Aorta (tissue), 5 donors: ENCODE measurements at regions of chr12 and their contacts with region 1.

Region 1: GRCh38 chr12:109995686-109996482 is at the start of gene GIT2:
- DNase-seq: peak; percentile 97
- ATAC-seq: peak; percentile 95
- H3K4me3 ChIP-seq: peak within 1 kb of the TSS; percentile 63 to 94
- H3K27ac ChIP-seq: peak within 1 kb of the TSS in 1 of 2 donors; percentile 7
- H3K4me1 ChIP-seq: peaks cover 0 to 3% of the 10 kb centered on the region in 2 donors
- H3K27me3 ChIP-seq: no peaks in the 10 kb centered on the region
- total RNA-seq, gene GIT2: 54.3 to 78.0 TPM

Region 2: DNA sequence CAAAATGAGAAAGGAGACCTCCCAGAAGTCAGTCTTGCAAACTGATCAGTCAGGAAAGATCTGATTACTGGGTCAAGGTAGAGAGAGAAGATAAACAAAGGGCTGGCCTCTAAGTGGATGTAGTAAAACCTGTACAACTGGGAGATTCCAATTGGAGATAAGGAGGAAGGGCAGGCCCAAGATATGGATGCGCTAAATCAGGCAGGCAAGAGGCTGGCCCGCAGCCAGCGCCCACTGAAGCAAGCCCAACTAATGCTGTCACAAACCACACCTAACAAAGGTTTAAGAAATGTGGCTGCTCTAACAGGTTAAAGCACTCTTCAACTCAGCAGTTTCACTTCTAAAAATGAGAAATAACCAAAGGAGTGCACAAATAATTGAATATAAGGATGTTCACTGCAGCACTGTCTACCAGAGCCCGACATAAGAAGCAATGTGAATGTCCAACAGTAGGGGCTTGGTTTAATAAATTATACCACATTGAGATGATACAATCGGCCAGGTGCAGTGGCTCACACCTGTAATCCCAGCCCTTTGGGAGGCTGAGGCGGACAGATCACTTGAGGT is 120.2 kb before region 1 on chr12:
- intact Hi-C with region 1: no loop called
- DNase-seq: no peak
- ATAC-seq: no peak
- H3K4me3 ChIP-seq: no peak overlapping the region
- H3K27ac ChIP-seq: no peak overlapping the region
- H3K4me1 ChIP-seq: peaks cover 0 to 4% of the 10 kb centered on the region in 2 donors
- H3K27me3 ChIP-seq: no peaks in the 10 kb centered on the region

Region 3: DNA sequence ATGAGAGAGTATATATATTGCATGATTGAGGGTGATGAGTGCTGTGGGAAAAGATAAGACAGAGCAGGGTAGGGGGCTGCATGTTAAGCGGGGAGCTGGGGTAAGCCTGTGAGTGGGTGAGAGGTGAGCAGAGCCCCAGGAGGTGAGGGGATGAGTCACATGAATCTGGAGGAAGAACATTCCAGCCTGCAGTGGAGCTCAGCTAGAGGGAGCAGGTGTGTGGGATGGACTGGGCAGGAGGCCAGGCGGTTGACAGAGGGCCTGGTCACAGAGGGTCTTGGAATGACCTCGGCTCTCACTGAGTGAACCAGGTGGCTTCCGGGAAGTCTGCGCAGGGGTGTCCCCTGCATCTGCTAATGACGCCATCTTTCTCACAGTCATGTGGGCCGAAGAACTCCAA is 44.1 kb before region 1 on chr12:
- intact Hi-C with region 1: loop called in 1 of 2 experiments (anchors 5 kb)
- DNase-seq: no peak
- ATAC-seq: no peak
- H3K4me3 ChIP-seq: no peak overlapping the region
- H3K27ac ChIP-seq: peak overlapping the region; percentile 3 to 95
- H3K4me1 ChIP-seq: peaks cover 4% of the 10 kb centered on the region in 2 donors
- H3K27me3 ChIP-seq: no peaks in the 10 kb centered on the region

Region 4: DNA sequence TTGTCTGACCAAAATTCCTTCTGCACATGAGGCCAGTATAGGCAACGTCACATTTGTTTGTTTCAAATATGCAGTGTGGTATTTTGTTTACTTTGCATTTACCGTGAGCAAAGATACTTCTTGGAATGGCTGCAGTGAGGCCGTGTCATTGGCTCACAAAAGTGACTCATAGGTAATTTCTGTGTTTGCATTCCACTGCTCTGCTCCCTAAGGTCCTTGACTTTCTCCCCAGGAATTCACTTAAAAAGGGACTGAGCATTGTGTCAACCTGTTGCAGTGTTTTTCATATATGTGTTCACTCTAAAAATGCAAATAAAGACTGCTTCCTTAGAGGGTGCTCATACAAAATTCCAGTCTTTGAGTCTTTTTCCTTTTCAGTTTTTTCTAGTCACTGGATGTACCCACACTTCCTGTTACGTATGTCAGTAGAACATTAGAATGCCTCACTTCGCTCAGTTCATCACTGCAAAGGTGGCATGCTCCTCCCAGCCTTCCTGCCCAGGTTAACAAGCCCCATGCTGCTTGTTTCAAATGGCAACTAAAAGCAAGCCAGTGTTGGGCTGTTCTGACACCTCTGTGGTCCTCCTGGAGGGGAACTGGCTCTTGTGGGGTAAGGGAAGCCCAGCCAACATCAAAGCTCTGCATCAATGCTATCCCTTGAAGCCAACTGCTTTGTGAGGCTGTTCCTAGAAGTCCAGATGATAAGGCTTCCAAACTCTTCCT is 43.4 kb after region 1 on chr12:
- intact Hi-C with region 1: loop called in 1 of 2 experiments (anchors 5 kb)
- DNase-seq: no peak
- ATAC-seq: no peak
- H3K4me3 ChIP-seq: no peak overlapping the region
- H3K27ac ChIP-seq: peak overlapping the region; percentile 95 to 100
- H3K4me1 ChIP-seq: peaks cover 0 to 5% of the 10 kb centered on the region in 2 donors
- H3K27me3 ChIP-seq: no peaks in the 10 kb centered on the region